Naive thymus-derived CD4-positive, alpha-beta T cell (primary cell): ENCODE measurements at regions of chr14 and their contacts with region 1.

Region 1: GRCh38 chr14:34227834-34228649 is 234.0 kb downstream of the SPTSSA start:
- DNase-seq: peak in 8 of 9 donors; percentile 5 to 61 (median 12)
- ATAC-seq: peak; percentile 71
- H3K4me3 ChIP-seq: no peak overlapping the region
- H3K4me3 Mint-ChIP-seq: peak overlapping the region in 3 of 10 donors; percentile 26 to 58 (median 39)
- H3K27ac ChIP-seq: no peak overlapping the region
- H3K27ac Mint-ChIP-seq: no peak overlapping the region
- H3K4me1 ChIP-seq: no peaks in the 10 kb centered on the region
- H3K4me1 Mint-ChIP-seq: peaks cover 0 to 18% (median 4%) of the 10 kb centered on the region in 7 donors
- H3K27me3 ChIP-seq: no peaks in the 10 kb centered on the region
- H3K27me3 Mint-ChIP-seq: peaks cover 0 to 23% (median 7%) of the 10 kb centered on the region in 5 donors

Region 2: GRCh38 chr14:32710731-32711680 is 1517.0 kb before region 1 on chr14:
- CTCF ChIA-PET with region 1: no interaction called
- POLR2A ChIA-PET with region 1: no interaction called
- intact Hi-C with region 1: loop called in 1 of 2 experiments (anchors 5 kb)
- DNase-seq: no peak
- ATAC-seq: no peak
- H3K4me3 ChIP-seq: no peak overlapping the region
- H3K4me3 Mint-ChIP-seq: no peak overlapping the region
- H3K27ac ChIP-seq: no peak overlapping the region
- H3K27ac Mint-ChIP-seq: no peak overlapping the region
- H3K4me1 ChIP-seq: no peaks in the 10 kb centered on the region
- H3K4me1 Mint-ChIP-seq: peaks cover 0 to 2% (median 0%) of the 10 kb centered on the region in 7 donors
- H3K27me3 ChIP-seq: no peaks in the 10 kb centered on the region
- H3K27me3 Mint-ChIP-seq: peaks cover 0 to 6% (median 0%) of the 10 kb centered on the region in 5 donors

Region 3: DNA sequence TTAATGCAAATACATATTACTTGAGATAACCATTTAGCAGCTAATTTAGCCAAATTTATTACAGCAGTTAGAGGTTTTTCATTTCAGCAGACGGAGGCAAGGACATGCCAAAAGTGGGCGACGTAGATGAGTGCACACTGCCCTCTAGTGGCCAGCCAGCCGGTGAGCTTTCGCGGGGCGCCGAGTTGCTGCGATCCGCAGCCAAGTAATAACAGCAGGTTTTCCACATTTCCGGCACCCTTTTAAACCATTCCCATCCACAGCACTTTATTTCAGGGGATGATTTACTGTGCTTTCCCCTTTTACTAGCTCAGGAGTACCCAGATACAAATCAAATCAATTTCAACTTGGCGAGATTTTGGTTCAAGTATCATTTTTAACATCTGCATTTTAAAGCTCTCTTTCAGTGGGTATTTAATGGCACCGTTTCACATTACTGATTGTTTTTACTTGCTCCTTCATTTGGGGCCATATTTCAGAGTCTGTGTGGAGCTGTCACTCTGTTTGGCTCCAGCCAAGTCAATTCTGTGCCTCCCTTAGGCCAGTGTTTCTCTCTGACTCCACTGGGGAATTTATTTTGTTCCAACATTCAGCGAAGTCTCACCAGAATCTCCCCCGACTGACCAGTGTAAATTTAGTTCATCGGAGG is 435.2 kb before region 1 on chr14:
- CTCF ChIA-PET with region 1: no interaction called
- POLR2A ChIA-PET with region 1: no interaction called
- intact Hi-C with region 1: loop called in 1 of 2 experiments (anchors 2 kb)
- DNase-seq: peak; percentile 10 to 72 (median 36)
- ATAC-seq: peak; percentile 72
- H3K4me3 ChIP-seq: no peak overlapping the region
- H3K4me3 Mint-ChIP-seq: peak overlapping the region; percentile 42 to 72 (median 67)
- H3K27ac ChIP-seq: no peak overlapping the region
- H3K27ac Mint-ChIP-seq: no peak overlapping the region
- H3K4me1 ChIP-seq: no peaks in the 10 kb centered on the region
- H3K4me1 Mint-ChIP-seq: peaks cover 10 to 21% (median 16%) of the 10 kb centered on the region in 7 donors
- H3K27me3 ChIP-seq: no peaks in the 10 kb centered on the region
- H3K27me3 Mint-ChIP-seq: peaks cover 36 to 56% (median 42%) of the 10 kb centered on the region in 5 donors

Region 4: DNA sequence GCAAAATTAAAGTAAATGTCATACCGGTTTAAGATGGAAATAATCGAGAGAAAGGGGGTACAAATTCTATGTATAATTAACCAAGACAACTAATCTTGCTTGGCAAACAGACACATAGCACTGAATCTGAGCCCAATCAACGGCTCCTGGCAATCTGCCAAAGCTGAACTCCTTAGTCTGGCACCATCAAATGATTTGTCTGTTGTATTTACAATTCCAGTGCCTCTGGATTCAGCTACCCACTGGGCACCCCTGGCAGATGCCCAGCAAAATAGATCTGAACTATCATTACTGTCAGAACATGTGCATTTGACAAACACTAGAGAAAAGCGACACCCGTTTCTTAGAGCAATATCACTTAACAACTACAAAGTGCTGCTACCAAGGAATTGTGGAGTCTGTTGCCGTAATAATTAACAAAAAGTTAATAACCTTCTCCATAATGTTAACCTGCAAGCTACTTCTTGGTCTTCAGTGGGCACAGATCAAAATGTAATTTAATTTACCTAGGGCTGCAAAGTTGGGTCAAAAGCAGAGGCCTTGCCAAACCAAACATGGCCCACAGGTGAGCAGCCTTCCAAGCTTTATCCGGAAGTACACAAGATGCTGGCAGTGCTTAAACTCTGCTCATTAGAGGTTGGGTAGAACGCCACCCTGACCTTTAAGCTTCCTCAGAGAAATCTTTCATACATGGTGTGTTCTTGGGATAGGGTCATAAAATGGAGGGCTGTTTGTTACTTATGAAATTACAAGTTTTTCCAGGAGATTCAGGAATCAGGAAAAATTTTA is 284.8 kb before region 1 on chr14:
- CTCF ChIA-PET with region 1: no interaction called
- POLR2A ChIA-PET with region 1: no interaction called
- intact Hi-C with region 1: loop called in 1 of 2 experiments (anchors 10 kb)
- DNase-seq: no peak
- ATAC-seq: no peak
- H3K4me3 ChIP-seq: no peak overlapping the region
- H3K4me3 Mint-ChIP-seq: no peak overlapping the region
- H3K27ac ChIP-seq: no peak overlapping the region
- H3K27ac Mint-ChIP-seq: peak overlapping the region in 1 of 9 donors; percentile 20
- H3K4me1 ChIP-seq: no peaks in the 10 kb centered on the region
- H3K4me1 Mint-ChIP-seq: peaks cover 4 to 64% (median 9%) of the 10 kb centered on the region in 7 donors
- H3K27me3 ChIP-seq: no peaks in the 10 kb centered on the region
- H3K27me3 Mint-ChIP-seq: peaks cover 7 to 43% (median 25%) of the 10 kb centered on the region in 5 donors

Region 5: DNA sequence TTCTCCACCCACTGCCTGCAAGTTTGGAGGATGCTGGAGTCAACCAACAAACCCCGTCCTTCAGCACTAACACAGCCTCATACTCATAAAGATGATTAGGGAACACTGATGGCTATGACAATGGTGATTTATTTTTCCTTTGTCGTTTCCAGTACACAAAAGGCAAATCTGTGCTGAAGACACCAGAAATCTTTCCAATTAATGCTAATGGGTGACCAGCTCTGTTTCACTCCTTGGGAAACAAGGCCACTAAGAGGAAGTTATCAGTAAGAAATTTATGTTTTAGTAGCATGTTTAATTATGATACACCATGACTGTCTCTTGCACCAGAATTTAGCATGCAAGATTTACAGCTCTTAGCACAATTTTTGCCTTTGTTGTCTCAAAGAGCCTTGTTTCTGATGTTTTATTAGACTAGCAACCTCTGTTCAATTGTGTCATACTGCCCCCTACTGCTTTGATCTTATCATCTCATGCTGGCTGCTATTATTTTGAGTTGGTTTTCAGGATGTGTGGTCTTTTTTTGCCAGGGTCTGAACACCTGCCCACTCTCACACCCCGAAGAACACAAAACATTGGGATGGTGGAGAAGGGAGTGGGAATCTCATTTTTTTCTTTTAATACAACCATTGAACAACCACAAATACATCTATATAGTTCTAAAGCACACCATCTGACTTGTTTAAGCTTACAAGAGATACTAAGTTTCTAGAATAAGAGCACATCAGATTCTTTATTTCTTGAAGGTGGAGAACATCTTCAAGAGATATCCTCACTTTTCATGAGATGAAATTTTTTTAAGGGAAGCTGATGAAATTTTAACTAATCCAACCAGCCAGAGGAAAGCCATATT is 73.1 kb after region 1 on chr14:
- CTCF ChIA-PET with region 1: no interaction called
- POLR2A ChIA-PET with region 1: no interaction called
- intact Hi-C with region 1: loop called in 1 of 2 experiments (anchors 2 kb)
- DNase-seq: no peak
- ATAC-seq: peak; percentile 32
- H3K4me3 ChIP-seq: no peak overlapping the region
- H3K4me3 Mint-ChIP-seq: no peak overlapping the region
- H3K27ac ChIP-seq: no peak overlapping the region
- H3K27ac Mint-ChIP-seq: no peak overlapping the region
- H3K4me1 ChIP-seq: no peaks in the 10 kb centered on the region
- H3K4me1 Mint-ChIP-seq: peaks cover 0 to 1% (median 0%) of the 10 kb centered on the region in 7 donors
- H3K27me3 ChIP-seq: no peaks in the 10 kb centered on the region
- H3K27me3 Mint-ChIP-seq: peaks cover 2 to 16% (median 9%) of the 10 kb centered on the region in 5 donors